ENCODE measurements at regions of chr9 and their contacts with region 1.

Region 1: DNA sequence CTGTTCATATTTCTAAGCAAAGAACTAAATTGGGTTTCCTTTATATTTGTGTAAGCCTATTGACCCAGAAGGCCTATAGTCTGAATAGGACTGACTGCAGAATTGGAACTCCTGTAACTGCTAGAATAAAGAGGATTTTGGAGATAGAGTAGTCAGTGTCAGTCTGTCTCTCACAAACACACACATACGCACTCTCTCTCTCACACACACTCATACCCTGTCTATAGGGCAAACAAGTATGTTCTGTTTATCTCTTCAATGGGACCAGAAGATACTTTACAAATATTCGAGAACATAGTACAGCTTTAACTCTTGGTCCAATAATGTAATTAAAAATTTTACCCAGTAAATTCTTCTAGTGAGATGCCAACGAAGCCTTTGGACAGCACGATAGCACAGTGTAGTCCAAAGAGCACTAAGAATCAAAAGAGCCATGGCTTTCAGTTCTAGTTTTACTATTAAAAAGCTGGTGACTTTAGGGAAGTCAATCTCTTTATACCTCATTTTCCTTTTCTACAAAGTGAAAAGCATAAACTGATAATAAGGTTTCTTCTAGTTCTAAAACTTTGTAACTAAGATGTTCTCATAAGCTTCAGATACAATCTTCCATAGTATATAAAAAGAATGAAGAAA is 19.3 kb downstream of the ABHD17B start:
- DNase-seq: no peak
- H3K4me3 ChIP-seq: no peak overlapping the region
- H3K27ac ChIP-seq: no peak overlapping the region
- H3K4me1 ChIP-seq: peaks cover 17% of the 10 kb centered on the region
- H3K27me3 ChIP-seq: no peaks in the 10 kb centered on the region
- CTCF ChIP-seq: no peak

Region 2: GRCh38 chr9:71795097-71795813 is 96.4 kb before region 1 on chr9:
- CTCF ChIA-PET with region 1: no interaction called
- dilution Hi-C with region 1: loop called (anchors 5 kb)
- in situ Hi-C with region 1: no loop called
- intact Hi-C with region 1: no loop called
- DNase-seq: no peak
- H3K4me3 ChIP-seq: no peak overlapping the region
- H3K27ac ChIP-seq: no peak overlapping the region
- H3K4me1 ChIP-seq: no peaks in the 10 kb centered on the region
- H3K27me3 ChIP-seq: no peaks in the 10 kb centered on the region
- CTCF ChIP-seq: no peak

Region 3: GRCh38 chr9:71819115-71819739 is 72.4 kb before region 1 on chr9:
- CTCF ChIA-PET with region 1: no interaction called
- dilution Hi-C with region 1: loop called (anchors 5 kb)
- in situ Hi-C with region 1: no loop called
- intact Hi-C with region 1: no loop called
- DNase-seq: no peak
- H3K4me3 ChIP-seq: no peak overlapping the region
- H3K27ac ChIP-seq: no peak overlapping the region
- H3K4me1 ChIP-seq: no peaks in the 10 kb centered on the region
- H3K27me3 ChIP-seq: no peaks in the 10 kb centered on the region
- CTCF ChIP-seq: peak; percentile 67 to 70